ENCODE measurements at regions of chr20 and their contacts with region 1.

Region 1: GRCh38 chr20:25076731-25077609 is 5.0 kb downstream of the VSX1 start:
- DNase-seq: peak; percentile 44 to 70 (median 63)
- ATAC-seq: peak; percentile 63
- H3K4me3 ChIP-seq: no peak overlapping the region
- H3K27ac ChIP-seq: peak overlapping the region in 1 of 4 donors; percentile 39
- H3K4me1 ChIP-seq: peaks cover 25% of the 10 kb centered on the region
- H3K27me3 ChIP-seq: peaks cover 0 to 3% of the 10 kb centered on the region in 2 donors
- CTCF ChIP-seq: peak in 5 of 7 experiments; percentile 9 to 49 (median 42)
- POLR2A ChIP-seq: no peak

Region 2: DNA sequence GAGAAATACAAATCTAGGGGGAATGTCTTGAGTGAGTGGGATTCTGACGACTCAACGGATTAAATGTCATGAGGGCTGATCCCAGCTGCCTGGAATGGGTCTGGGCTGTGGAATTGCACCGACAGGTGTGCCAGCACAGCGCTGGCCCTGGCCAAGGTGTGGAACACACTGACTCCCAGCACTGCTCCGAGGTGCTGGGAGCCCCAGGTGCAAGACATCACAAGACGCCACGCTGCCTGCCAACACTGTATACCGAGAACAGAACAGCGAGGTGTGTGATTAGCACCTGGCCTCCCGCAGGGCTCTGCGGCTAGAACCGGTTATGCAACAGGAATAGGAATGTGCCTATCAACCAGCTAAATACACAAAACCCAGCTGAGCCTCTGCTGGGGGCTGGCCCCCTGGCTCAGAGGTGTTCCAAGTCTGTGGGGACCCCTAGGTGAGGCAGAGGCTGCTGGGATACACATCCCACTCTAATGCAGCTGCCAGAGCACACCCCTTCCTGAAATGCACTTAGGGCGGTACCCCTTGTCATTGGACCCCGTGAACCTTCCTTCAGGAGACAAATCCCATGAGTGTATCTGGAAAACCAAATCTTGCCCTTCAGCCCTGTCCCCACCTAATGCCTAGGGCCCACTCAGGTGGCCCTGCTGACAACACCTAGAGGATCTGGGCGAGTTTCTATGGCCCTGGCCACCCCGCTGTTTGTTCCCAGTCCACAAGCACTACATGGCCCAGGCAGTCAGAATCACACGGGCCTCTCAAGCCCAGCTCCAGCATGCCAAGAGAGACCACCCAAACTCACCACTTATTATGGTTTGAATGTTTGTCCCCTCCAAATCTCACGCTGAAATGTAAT is 59.5 kb before region 1 on chr20:
- intact Hi-C with region 1: no loop called
- DNase-seq: peak; percentile 96 to 100 (median 98)
- ATAC-seq: peak; percentile 97
- H3K4me3 ChIP-seq: no peak overlapping the region
- H3K27ac ChIP-seq: peak overlapping the region; percentile 89 to 98 (median 95)
- H3K4me1 ChIP-seq: peaks cover 78% of the 10 kb centered on the region
- H3K27me3 ChIP-seq: no peaks in the 10 kb centered on the region
- CTCF ChIP-seq: peak in 4 of 7 experiments; percentile 27 to 41 (median 38)
- POLR2A ChIP-seq: peak in 2 of 3 donors; percentile 58

Region 3: DNA sequence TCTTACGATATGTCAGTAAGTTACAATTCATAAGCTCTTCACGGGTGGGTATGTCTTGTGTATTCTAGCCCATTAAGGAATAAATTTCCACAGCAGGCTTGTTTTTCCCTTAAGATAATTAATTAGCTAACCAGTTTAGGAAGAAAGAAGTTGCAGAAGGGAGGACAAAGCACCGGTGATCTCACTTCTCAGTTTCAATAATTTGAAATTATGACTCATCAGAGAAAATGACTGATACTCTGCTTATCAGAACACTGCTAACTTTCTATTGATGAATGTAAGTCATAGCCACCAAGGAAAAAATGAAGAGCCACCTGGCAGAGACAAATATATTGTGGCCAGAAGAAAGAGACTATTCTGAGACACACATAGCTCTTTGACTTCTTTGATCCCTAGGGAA is 83.5 kb after region 1 on chr20:
- intact Hi-C with region 1: loop called (anchors 10 kb)
- DNase-seq: no peak
- ATAC-seq: no peak
- H3K4me3 ChIP-seq: no peak overlapping the region
- H3K27ac ChIP-seq: no peak overlapping the region
- H3K4me1 ChIP-seq: no peaks in the 10 kb centered on the region
- H3K27me3 ChIP-seq: no peaks in the 10 kb centered on the region
- CTCF ChIP-seq: no peak
- POLR2A ChIP-seq: no peak

Region 4: GRCh38 chr20:25179439-25180089 is 102.6 kb after region 1 on chr20:
- intact Hi-C with region 1: loop called (anchors 10 kb)
- DNase-seq: no peak
- ATAC-seq: no peak
- H3K4me3 ChIP-seq: no peak overlapping the region
- H3K27ac ChIP-seq: no peak overlapping the region
- H3K4me1 ChIP-seq: peaks cover 26% of the 10 kb centered on the region
- H3K27me3 ChIP-seq: no peaks in the 10 kb centered on the region
- CTCF ChIP-seq: no peak
- POLR2A ChIP-seq: no peak

Region 5: GRCh38 chr20:25389401-25389852 is 312.5 kb after region 1 on chr20:
- intact Hi-C with region 1: no loop called
- DNase-seq: peak in 1 of 4 donors; percentile 10
- ATAC-seq: no peak
- H3K4me3 ChIP-seq: peak overlapping the region in 1 of 2 donors; percentile 84
- H3K27ac ChIP-seq: peak overlapping the region; percentile 86 to 97 (median 92)
- H3K4me1 ChIP-seq: peaks cover 21% of the 10 kb centered on the region
- H3K27me3 ChIP-seq: no peaks in the 10 kb centered on the region
- CTCF ChIP-seq: no peak
- POLR2A ChIP-seq: no peak

Measured in body of pancreas (tissue), 4 donors.